A673 (cell line): ENCODE measurements at regions of chr3 and their contacts with region 1.

Region 1: GRCh38 chr3:192840143-192840836 is 77.4 kb downstream of the MB21D2 start:
- DNase-seq: no peak
- H3K4me3 ChIP-seq: no peak overlapping the region
- H3K27ac ChIP-seq: no peak overlapping the region
- H3K4me1 ChIP-seq: peaks cover 5% of the 10 kb centered on the region
- H3K27me3 ChIP-seq: no peaks in the 10 kb centered on the region
- CTCF ChIP-seq: no peak

Region 2: DNA sequence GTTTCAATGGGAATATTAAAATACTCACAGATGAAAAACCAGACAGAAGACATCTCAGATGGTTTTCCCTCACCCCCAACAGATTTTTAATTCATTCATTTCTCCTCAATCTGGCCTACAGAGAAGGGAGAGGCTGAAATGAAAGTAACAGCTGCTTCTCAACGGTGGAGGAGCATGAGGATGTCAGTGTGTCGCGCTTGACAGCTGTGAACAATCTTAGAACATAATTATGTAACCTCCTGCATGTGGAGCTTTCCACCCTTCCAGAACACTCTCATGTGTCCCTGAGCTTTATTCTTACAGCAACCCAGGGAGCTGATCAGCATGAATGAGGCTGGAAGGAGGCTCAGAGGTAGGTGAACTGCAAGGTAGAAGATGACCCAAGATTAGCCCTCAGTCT is 24.7 kb after region 1 on chr3:
- CTCF ChIA-PET with region 1: interaction called, 10 read pairs
- POLR2A ChIA-PET with region 1: interaction called, 4 read pairs
- intact Hi-C with region 1: no loop called
- DNase-seq: peak; percentile 49
- H3K4me3 ChIP-seq: no peak overlapping the region
- H3K27ac ChIP-seq: no peak overlapping the region
- H3K4me1 ChIP-seq: peaks cover 12% of the 10 kb centered on the region
- H3K27me3 ChIP-seq: no peaks in the 10 kb centered on the region
- CTCF ChIP-seq: no peak

Region 3: GRCh38 chr3:192943393-192943792 is 103.1 kb after region 1 on chr3:
- CTCF ChIA-PET with region 1: no interaction called
- POLR2A ChIA-PET with region 1: no interaction called
- intact Hi-C with region 1: no loop called
- DNase-seq: no peak
- H3K4me3 ChIP-seq: no peak overlapping the region
- H3K27ac ChIP-seq: no peak overlapping the region
- H3K4me1 ChIP-seq: no peaks in the 10 kb centered on the region
- H3K27me3 ChIP-seq: no peaks in the 10 kb centered on the region
- CTCF ChIP-seq: no peak

Region 4: GRCh38 chr3:192986379-192986778 is 146.1 kb after region 1 on chr3:
- CTCF ChIA-PET with region 1: no interaction called
- POLR2A ChIA-PET with region 1: no interaction called
- intact Hi-C with region 1: no loop called
- DNase-seq: no peak
- H3K4me3 ChIP-seq: no peak overlapping the region
- H3K27ac ChIP-seq: no peak overlapping the region
- H3K4me1 ChIP-seq: no peaks in the 10 kb centered on the region
- H3K27me3 ChIP-seq: no peaks in the 10 kb centered on the region
- CTCF ChIP-seq: no peak